AG04449 (cell line): ENCODE measurements at regions of chr11 and their contacts with region 1.

Region 1: DNA sequence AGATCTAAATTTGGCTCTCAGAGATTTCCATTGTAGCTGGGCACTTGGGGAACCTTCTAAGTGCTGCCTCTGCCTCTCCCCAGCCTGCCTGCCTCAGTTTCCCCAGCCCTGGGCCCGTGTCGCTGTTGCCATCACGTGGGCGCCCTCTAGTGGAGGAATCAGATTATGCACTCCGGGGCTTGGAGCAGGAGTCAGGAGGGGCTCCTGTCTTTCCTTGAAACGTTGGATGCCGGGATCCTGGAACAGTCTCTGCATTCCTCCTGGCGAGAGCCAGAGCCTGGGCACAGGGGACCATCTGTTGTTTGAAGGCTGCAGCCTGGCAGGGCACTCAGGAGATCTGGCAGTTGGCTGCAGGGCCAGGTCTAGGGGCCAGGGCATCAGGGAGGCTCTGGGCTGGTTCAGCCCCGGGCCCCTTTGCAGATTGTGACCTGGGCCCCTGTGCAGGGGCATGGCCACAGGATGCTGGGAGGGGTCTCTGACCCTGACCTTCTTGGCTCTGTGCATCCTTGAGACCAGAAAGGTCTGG is 71.6 kb downstream of the LRP5 start:
- DNase-seq: no peak
- H3K4me3 ChIP-seq: no peak overlapping the region
- CTCF ChIP-seq: peak; percentile 91

Region 2: GRCh38 chr11:66727282-66727882 is 1656.7 kb before region 1 on chr11:
- CTCF ChIA-PET with region 1: no interaction called
- POLR2A ChIA-PET with region 1: no interaction called
- DNase-seq: no peak
- H3K4me3 ChIP-seq: peak overlapping the region; percentile 40
- CTCF ChIP-seq: no peak

Region 3: DNA sequence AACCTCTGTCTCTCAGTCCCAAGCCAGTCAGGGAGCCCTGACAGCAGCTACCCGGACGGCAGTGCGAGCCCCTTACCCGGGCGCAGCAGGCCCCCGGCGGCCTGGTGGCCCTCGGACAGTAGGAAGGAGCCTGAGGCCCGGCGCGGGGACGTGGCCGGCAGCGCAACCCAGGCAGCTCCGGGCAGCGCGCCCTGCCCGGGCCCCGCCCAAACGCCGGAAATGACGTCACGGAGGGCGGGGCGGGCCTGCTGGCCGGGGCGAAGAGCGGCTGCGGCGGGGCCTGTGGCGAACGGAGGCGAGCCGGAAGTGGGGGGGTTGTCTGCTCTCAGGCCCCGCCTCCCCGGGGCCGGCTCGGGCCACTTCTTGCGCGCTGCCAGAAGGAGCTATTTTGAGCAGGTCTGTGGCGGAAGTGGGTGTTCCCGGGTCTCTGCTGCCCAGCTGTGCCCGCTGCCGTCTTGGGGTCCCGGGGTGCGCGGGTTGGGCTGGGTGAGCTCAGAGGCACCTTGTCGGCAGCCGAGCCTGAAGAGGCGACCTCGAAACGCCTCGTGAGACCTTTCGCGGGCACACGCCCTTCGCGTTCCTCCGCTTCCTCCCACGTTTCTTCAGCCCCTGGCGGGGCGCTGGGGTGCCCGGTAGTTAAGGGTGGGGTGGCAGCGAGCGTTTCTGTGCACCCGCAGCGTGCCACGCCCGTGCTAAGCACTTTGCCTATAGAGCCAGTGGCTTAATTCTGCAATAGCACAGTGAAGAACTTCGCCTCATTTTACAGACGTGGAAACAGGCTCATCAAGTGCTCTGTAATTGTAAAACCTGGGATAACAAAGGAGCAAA is 112.0 kb before region 1 on chr11 and contains the start of gene C11orf24:
- CTCF ChIA-PET with region 1: interaction called, 12 read pairs
- POLR2A ChIA-PET with region 1: interaction called, 3 read pairs
- DNase-seq: peak; percentile 53
- H3K4me3 ChIP-seq: peak within 1 kb of the TSS; percentile 95
- CTCF ChIP-seq: no peak

Region 4: DNA sequence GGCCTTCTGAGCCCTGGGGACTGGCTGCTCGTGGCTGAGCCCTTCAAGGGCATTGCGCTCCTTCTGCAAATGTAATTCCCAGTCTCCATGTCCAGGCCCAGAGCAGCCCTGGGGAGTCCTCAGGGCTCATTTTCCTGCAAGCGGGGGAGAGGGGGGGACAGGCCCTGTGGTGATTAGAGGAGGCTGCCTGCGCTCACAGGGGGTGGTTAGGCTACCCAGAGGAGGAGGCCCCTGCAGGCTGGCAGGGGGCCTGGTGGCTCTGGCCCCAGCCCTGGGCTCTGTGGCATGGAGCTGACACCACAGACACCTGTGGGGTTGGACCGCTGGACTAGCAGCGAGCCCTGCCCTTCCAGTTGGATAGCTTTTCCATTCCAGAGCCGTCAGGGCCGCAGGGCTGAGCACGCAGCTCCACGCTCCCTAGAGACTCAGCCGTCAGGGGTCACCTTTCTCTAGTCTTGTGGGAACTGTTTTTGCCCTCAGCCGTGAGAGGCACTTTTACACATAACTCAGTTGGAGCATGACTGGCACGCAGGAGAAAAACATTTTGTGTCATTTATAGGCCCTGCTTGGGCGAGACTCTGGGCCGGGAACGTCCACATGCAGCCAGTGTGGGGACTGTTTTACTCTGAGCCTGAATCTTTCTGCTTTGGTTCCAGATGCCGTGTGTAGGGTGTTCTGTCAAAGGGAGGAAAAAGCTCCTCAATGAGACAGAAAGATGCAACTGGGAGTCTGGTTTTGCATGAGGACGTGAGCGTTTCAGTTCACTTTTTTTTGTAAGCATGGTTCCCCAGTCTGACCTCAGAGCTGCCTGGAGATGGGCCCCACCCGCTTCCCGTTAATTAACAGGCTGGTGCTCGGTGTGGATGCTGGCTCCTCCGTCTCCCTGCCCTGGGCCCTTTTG is 13.6 kb before region 1 on chr11:
- CTCF ChIA-PET with region 1: interaction called, 76 read pairs
- POLR2A ChIA-PET with region 1: interaction called, 3 read pairs
- DNase-seq: no peak
- H3K4me3 ChIP-seq: no peak overlapping the region
- CTCF ChIP-seq: no peak

Region 5: GRCh38 chr11:68398995-68399851 is 15.2 kb after region 1 on chr11:
- CTCF ChIA-PET with region 1: interaction called, 66 read pairs
- POLR2A ChIA-PET with region 1: no interaction called
- DNase-seq: no peak
- H3K4me3 ChIP-seq: no peak overlapping the region
- CTCF ChIP-seq: no peak

Region 6: DNA sequence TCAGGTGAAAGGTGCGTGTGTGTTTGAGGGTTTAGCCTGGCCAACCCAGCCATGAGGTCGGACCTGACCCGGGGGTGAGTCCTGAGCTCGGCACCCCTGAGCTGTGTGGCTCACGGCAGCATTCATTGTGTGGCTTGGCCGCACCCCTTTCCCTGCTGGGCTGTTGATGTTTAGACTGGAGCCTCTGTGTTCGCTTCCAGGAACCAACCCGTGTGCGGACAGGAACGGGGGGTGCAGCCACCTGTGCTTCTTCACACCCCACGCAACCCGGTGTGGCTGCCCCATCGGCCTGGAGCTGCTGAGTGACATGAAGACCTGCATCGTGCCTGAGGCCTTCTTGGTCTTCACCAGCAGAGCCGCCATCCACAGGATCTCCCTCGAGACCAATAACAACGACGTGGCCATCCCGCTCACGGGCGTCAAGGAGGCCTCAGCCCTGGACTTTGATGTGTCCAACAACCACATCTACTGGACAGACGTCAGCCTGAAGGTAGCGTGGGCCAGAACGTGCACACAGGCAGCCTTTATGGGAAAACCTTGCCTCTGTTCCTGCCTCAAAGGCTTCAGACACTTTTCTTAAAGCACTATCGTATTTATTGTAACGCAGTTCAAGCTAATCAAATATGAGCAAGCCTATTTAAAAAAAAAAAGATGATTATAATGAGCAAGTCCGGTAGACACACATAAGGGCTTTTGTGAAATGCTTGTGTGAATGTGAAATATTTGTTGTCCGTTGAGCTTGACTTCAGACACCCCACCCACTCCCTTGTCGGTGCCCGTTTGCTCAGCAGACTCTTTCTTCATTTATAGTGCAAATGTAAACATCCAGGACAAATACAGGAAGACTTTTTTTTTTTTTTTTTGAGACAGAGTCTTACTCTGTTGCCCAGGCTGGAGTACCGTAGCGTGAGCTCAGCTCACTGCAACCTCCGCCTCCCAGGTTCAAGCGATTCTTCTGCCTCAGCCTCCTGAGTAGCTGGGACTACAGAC is 22.6 kb after region 1 on chr11:
- CTCF ChIA-PET with region 1: interaction called, 12 read pairs
- POLR2A ChIA-PET with region 1: no interaction called
- DNase-seq: no peak
- H3K4me3 ChIP-seq: no peak overlapping the region
- CTCF ChIP-seq: no peak

Region 7: DNA sequence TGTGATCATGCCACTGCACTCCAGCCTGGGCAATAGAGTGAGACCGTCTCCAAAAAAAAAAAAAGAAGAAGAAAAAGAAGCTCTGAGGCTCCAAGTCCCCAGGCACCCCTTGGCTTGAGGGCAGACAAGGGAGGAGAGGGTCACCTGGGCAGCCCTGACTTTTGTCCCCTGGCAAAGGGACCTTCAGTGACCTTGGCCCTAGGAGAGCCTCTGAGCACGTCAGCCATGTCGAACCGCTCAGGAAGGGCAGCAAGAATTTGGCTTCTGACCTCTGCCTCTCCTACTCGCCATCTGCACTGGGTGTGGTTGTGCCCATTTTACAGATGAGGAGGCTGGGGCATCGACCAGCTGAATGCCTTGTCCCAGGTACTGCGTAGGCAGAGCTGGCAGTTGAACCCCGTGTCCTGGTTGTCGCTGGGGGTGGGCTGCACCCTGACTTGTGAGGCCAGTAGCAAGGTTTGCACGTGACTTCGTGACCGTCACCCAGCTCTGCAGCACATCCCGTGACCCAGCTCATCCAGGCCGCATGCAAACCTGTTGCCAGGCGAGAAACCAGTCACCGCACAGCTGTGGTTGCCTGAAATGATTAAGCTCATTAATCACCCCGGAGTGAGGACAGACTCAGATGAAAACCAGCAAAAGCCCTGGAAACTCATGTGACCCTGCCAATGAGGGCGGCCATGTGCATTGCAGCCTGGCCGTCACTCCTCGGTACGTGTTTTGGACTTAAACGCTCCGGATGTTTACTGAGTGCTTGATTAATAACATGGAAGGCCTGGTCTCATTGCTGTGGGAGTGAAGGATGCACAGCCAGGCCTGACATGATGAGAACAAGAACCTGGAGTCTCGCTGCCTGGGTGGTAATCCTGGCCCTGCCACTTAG is 28.8 kb after region 1 on chr11:
- CTCF ChIA-PET with region 1: interaction called, 17 read pairs
- POLR2A ChIA-PET with region 1: no interaction called
- DNase-seq: peak; percentile 44
- H3K4me3 ChIP-seq: no peak overlapping the region
- CTCF ChIP-seq: no peak